Psoas muscle (tissue), 8 donors: ENCODE measurements at regions of chr17 and their contacts with region 1.

Region 1: GRCh38 chr17:38824899-38825761 is at the start of gene CWC25:
- DNase-seq: peak; percentile 93 to 97
- ATAC-seq: peak; percentile 92 to 96 (median 94)
- H3K4me3 ChIP-seq: peak within 1 kb of the TSS; percentile 91
- H3K27ac ChIP-seq: peak within 1 kb of the TSS; percentile 98
- H3K4me1 ChIP-seq: peaks cover 9% of the 10 kb centered on the region
- H3K27me3 ChIP-seq: no peaks in the 10 kb centered on the region
- CTCF ChIP-seq: no peak
- total RNA-seq, gene CWC25: 9.7 to 21.3 (median 15.3) TPM

Region 2: DNA sequence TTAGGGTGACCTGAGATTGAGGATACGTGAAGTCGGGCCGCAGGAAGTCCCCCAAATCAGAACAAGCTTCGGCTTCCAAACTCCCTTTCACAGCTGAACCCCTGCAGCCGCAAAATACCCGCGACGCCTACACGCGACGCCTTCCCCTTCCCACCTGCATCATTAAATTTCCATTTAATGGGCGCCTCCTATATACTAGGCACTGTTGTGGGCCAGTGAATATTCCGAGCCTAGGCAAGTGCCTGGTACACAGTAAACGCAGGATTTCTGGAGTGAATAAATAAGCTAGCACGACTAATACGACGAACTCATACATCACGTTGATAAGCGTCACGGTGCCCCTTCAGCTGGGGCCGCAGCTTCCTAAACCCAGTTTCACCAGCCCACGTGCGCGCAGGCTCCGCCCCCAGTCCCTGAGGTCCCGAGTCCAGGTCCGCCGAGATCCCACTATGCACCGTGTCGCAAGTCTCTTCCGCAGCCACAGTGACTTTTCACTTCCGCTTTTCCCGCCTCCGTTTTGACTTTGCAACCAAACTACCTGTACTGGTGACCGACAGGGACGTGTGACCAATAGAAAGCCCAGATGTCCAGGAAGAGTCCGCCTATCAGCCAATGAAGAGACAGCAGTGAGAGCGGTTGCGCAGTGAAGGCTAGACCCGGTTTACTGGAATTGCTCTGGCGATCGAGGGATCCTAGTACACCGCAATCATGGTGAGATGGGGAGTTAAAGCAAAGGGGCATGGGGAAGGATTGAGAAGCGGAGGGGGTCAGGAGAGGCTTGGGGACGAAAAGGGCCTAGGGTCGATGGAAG is 72.8 kb before region 1 on chr17 and contains the start of gene PSMB3:
- intact Hi-C with region 1: loop called in 1 of 2 experiments (anchors 10 kb)
- DNase-seq: peak; percentile 96 to 98
- ATAC-seq: peak; percentile 90 to 94 (median 92)
- H3K4me3 ChIP-seq: peak within 1 kb of the TSS; percentile 79
- H3K27ac ChIP-seq: peak within 1 kb of the TSS; percentile 92
- H3K4me1 ChIP-seq: peaks cover 32% of the 10 kb centered on the region
- H3K27me3 ChIP-seq: peaks cover 0 to 42% (median 8%) of the 10 kb centered on the region in 3 donors
- CTCF ChIP-seq: no peak
- total RNA-seq, gene PSMB3: 112 to 209 (median 184) TPM